Mammary epithelial cell (primary cell): ENCODE measurements at regions of chr9 and their contacts with region 1.

Region 1: DNA sequence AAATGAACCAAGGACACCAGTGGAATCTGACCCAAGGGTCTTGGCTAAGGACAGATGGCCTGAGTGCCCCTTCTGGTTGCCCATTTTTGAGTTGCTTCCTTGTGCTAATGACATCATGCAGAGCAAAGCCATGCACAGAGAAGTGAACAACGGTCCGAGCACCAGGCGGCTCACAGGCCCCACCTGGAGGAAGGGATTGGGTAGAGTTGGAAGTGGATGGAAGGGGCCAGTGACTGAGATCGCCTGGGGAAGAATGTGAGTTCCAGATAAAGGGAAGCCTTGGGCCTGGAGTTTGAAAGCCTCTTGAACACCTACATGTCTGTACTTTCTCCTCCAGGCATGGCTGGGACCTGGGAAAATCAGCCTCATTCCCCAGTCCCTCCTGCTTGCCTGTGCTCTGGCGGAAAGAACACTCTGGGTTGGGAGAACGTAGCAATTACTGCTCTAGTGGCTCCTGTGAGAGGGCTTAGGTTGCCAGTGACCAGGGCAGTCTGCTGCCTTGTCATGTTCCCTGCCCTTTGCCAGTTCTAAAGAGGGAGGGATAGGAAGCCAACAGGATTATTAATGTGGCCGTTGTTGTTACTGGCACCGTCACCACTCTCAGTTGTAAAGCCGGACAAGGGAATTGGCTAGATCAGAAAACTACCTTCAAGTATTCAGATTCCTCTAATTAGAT is 62.5 kb upstream of the PTPN3 start:
- DNase-seq: no peak
- H3K4me3 ChIP-seq: no peak overlapping the region
- H3K27ac ChIP-seq: no peak overlapping the region
- H3K4me1 ChIP-seq: peaks cover 24% of the 10 kb centered on the region
- H3K27me3 ChIP-seq: no peaks in the 10 kb centered on the region
- CTCF ChIP-seq: peak; percentile 32 to 49

Region 2: DNA sequence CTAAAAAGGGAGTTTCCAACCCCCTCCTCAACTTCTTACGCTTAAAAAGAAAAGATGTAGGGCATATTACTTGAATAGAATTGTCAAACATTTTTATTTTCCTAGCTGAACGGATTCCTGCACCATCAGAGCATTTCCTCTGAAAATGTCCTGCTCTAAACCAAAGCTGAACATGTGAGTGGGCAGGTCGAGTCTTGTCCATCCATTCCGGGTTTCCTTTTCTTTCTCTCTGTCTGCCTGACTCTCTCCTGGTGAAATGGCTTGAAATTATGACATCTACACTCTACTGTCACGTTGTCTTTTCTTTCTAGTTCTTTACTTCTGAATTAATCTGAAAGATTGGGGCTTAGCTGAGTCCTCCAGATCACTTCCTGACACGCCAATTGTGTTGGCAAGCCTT is 23.3 kb before region 1 on chr9:
- CTCF ChIA-PET with region 1: no interaction called
- dilution Hi-C with region 1: no loop called
- in situ Hi-C with region 1: no loop called
- intact Hi-C with region 1: loop called (anchors 1 kb)
- DNase-seq: peak; percentile 76
- H3K4me3 ChIP-seq: peak overlapping the region in 2 of 3 experiments; percentile 15
- H3K27ac ChIP-seq: peak overlapping the region; percentile 77
- H3K4me1 ChIP-seq: peaks cover 33% of the 10 kb centered on the region
- H3K27me3 ChIP-seq: no peaks in the 10 kb centered on the region
- CTCF ChIP-seq: no peak